Head of caudate nucleus (tissue), 42 donors: ENCODE measurements at regions of chr14 and their contacts with region 1.

Region 1: DNA sequence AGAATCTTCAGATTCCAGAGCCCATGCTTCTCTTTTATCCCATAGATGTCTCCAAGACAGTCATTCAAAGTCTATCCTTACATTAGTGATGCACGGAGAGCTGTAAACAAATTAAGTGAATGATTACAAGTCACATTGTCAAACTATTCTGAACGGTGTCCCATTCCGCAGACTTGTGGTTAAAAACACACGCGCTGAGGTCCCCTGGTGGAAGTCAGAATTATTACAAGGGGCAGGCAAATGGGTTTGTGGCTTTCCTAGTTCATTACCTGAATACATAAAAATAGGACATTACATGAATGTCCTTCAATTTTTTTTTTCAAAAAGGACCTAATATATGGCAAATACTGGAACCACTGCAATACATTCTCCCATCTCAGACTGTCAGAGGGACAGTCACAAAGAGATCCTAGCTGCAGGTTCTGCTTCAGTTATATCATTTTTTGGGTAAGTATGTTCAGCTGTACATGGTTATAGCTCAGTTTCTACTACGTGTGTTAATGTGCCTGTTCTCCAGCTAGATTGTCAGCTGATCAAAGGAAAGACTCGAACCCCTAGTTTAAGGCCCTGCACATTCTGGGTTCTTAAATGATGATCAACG is 53.1 kb upstream of the STON2 start:
- DNase-seq: peak in 40 of 42 donors; percentile 39 to 88 (median 69)

Region 2: DNA sequence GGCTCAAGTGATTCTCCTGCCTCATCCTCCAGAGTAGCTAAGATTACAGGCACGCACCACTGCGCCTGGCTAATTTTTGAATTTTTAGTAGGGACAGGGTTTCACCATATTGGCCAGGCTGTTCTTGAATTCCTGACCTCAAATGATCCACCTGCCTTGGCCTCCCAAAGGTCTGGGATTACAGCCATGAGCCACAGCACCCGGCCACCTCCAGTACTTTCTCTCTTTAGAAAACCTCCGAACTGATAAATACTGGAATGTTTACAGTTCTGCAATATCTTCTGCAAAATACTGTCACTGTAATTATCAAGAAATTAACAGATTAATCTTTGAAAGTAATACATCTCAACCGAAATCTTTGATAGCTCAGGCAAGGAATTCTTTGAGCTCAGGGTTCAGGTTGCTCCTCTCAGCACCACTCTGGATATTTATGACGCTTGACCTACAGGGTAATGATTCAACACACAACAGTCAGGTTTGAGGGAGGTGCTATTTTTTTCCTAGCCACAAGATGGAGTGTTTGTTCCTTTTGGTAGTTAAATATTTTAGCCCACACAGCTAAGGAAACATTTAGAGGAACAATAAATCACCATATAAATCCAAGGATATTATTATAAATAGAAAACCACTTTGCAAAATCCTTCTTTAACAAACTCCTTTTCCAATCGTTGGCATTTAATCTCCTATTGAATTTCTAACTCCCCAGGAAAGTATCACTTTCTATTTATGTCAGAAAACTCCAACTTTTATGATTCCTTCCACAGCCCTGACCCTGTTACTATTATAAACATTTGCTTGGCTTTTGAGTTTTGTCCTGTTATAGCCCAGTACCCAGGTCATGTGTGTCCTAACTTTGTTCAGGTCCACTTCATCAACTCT is 183.9 kb before region 1 on chr14:
- intact Hi-C with region 1: loop called (anchors 2 kb)
- DNase-seq: peak in 13 of 42 donors; percentile 17 to 76 (median 46)

Region 3: DNA sequence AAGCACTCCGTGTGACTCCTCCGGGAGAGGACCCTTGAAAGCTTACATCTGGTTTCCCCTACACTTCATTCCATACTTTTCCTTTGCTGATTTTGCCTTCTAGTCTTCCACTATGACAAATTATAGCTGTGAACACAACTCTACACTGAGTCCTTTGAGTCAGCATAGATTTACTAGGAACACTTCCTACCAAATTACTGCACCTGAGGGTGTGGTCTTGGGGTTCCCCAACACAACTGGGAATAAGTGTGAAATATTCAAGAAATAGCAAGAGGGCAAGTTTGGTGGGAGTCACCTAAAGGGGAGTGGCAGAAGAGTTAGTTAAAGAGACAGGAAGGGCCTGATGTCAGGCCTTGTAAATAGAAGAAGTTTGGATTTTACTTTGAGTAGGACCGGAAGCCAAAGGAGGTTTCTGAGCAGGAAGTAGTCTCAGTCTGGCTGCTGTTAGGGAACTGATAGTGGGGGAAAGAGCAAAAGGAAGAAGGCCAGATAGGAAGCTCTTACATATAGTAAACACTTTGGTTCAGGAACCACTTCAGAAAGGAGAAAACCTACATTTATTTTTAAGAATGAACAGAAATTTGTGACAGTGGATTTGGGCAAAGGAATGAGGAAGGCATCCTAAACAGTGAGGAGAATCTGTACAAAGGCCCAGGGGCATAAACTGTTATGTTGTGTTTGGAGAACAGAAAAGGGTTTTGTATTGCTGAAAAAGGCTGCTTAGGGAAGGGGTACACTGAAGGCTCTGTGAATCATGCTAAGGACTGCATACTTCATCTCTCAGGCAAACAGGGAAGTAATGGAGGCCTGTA is 66.1 kb after region 1 on chr14:
- intact Hi-C with region 1: no loop called
- DNase-seq: peak in 2 of 42 donors; percentile 19 to 25